Activated CD8-positive, alpha-beta memory T cell treated with anti-CD3 and anti-CD28 coated beads, Interleukin-2, amount 10 ng/mL, durations not matched to agents 7 days and 5 days (primary cell): ENCODE measurements at regions of chr2 and their contacts with region 1.

Region 1: GRCh38 chr2:233053928-233054784 is 6.0 kb upstream of the INPP5D start:
- DNase-seq: peak; percentile 76
- ATAC-seq: peak; percentile 82
- H3K4me3 Mint-ChIP-seq: no peak overlapping the region
- H3K27ac Mint-ChIP-seq: no peak overlapping the region
- H3K4me1 Mint-ChIP-seq: peaks cover 12% of the 10 kb centered on the region
- H3K27me3 Mint-ChIP-seq: peaks cover 22% of the 10 kb centered on the region

Region 2: DNA sequence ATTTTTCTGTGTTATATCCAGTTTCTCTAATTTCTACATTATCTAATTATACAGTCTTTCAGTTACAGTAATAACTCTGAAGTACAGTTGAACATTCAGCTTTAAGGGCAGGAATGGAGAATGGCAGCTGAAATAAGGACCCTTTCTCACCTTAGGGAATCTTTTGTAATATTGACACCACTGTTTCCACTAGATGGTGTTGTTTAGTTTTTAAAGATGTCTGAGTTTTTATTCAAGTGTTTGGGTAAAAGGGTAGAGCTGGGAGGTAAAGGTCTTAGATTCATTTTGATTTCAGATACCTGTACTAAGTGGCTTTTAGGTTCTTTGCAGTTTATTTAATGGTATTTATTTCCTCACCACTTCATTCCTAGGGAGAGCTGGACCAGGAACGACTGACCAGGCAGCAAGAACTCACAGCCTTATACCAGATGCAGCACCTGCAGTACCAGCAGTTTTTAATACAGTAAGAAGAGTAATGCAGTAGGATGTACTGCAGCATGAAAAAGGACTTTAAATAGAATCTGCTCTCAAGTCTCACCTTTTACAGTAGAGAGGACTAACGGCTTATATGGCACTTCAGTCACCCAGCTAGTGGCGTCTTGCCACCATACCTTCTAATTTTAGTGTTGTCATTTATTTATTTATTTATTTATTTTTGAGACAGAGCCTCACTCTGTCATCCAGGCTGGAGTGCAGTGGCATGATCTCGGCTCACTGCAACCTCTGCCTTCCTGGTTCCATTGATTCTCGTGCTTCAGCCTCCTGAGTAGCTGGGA is 244.6 kb before region 1 on chr2:
- CTCF ChIA-PET with region 1: interaction called, 13 read pairs
- DNase-seq: no peak
- ATAC-seq: no peak
- H3K4me3 Mint-ChIP-seq: no peak overlapping the region
- H3K27ac Mint-ChIP-seq: no peak overlapping the region
- H3K4me1 Mint-ChIP-seq: peaks cover 7% of the 10 kb centered on the region
- H3K27me3 Mint-ChIP-seq: no peaks in the 10 kb centered on the region

Region 3: GRCh38 chr2:232927793-232928550 is 126.2 kb before region 1 on chr2:
- CTCF ChIA-PET with region 1: no interaction called
- DNase-seq: no peak
- ATAC-seq: peak; percentile 16
- H3K4me3 Mint-ChIP-seq: no peak overlapping the region
- H3K27ac Mint-ChIP-seq: no peak overlapping the region
- H3K4me1 Mint-ChIP-seq: peaks cover 10% of the 10 kb centered on the region
- H3K27me3 Mint-ChIP-seq: peaks cover 66% of the 10 kb centered on the region

Region 4: DNA sequence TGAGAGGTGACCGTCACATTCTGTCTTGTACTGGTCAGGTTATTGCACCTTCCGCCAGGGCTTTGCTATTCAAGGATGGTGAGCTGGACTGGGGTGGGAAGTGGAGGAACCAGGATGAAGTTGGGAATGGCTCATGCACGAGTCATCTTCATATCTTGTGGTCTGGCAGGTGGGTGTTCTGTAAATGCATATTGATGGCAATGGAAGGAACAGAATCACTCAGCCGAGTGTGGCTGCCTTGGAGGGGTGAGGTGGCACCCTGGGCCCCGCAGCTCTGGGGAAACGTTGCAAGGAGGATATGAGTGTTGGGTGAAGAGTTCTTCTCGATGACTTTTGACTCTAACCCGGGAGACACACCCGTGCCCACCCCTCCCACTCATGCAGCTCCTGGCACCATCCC is 20.5 kb before region 1 on chr2:
- CTCF ChIA-PET with region 1: interaction called, 12 read pairs
- DNase-seq: no peak
- ATAC-seq: no peak
- H3K4me3 Mint-ChIP-seq: no peak overlapping the region
- H3K27ac Mint-ChIP-seq: no peak overlapping the region
- H3K4me1 Mint-ChIP-seq: no peaks in the 10 kb centered on the region
- H3K27me3 Mint-ChIP-seq: no peaks in the 10 kb centered on the region

Region 5: GRCh38 chr2:233075966-233076339 is 21.8 kb after region 1 on chr2:
- CTCF ChIA-PET with region 1: interaction called, 71 read pairs
- DNase-seq: peak; percentile 57
- ATAC-seq: peak; percentile 57
- H3K4me3 Mint-ChIP-seq: no peak overlapping the region
- H3K27ac Mint-ChIP-seq: no peak overlapping the region
- H3K4me1 Mint-ChIP-seq: peaks cover 42% of the 10 kb centered on the region
- H3K27me3 Mint-ChIP-seq: no peaks in the 10 kb centered on the region

Region 6: GRCh38 chr2:233131936-233132720 is 78.0 kb after region 1 on chr2:
- CTCF ChIA-PET with region 1: interaction called, 10 read pairs
- DNase-seq: no peak
- ATAC-seq: no peak
- H3K4me3 Mint-ChIP-seq: no peak overlapping the region
- H3K27ac Mint-ChIP-seq: no peak overlapping the region
- H3K4me1 Mint-ChIP-seq: peaks cover 38% of the 10 kb centered on the region
- H3K27me3 Mint-ChIP-seq: no peaks in the 10 kb centered on the region

Region 7: DNA sequence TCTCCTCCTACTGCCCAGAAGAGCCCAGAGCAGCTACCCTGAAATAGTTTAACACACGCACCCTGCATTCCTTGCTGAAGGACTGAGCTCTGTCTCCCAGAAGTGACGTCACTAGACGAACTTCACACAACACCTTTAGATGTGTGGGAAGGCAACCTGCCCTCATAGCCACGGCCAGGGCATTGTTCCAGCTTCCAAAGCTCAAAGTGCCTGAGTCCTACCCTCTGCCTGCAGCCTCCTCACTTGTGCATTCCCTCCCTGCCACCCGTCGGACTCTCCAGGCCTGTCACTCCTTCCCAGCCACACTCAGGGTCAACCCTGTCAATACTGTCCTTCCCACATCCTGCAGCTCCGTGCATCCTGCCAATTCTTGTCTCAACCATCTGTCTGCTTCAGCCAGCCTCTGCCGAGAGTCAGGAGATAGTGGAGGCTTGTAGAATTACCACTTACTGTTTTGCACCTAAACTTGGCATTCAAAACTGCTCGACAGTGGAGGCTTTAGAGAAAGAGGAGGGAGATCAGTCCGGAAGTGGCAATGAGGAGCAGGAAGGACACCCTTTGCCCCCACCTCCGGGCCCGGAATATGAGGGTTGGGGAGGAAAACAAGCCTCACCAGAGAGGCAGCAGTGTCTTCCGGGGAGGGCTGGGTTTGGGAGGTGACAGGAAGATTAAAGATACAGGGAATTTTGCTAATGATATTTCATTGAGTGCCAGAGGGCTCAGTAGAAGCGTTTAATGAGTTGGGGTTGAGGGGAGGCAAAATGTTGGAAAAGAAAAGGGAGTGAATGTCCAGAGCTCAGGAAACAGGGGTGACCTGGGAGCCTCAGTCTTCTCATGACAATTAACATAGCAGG is 125.1 kb after region 1 on chr2:
- CTCF ChIA-PET with region 1: no interaction called
- DNase-seq: no peak
- ATAC-seq: no peak
- H3K4me3 Mint-ChIP-seq: no peak overlapping the region
- H3K27ac Mint-ChIP-seq: peak overlapping the region; percentile 51
- H3K4me1 Mint-ChIP-seq: no peaks in the 10 kb centered on the region
- H3K27me3 Mint-ChIP-seq: no peaks in the 10 kb centered on the region